ENCODE measurements at regions of chr7 and their contacts with region 1.

Region 1: DNA sequence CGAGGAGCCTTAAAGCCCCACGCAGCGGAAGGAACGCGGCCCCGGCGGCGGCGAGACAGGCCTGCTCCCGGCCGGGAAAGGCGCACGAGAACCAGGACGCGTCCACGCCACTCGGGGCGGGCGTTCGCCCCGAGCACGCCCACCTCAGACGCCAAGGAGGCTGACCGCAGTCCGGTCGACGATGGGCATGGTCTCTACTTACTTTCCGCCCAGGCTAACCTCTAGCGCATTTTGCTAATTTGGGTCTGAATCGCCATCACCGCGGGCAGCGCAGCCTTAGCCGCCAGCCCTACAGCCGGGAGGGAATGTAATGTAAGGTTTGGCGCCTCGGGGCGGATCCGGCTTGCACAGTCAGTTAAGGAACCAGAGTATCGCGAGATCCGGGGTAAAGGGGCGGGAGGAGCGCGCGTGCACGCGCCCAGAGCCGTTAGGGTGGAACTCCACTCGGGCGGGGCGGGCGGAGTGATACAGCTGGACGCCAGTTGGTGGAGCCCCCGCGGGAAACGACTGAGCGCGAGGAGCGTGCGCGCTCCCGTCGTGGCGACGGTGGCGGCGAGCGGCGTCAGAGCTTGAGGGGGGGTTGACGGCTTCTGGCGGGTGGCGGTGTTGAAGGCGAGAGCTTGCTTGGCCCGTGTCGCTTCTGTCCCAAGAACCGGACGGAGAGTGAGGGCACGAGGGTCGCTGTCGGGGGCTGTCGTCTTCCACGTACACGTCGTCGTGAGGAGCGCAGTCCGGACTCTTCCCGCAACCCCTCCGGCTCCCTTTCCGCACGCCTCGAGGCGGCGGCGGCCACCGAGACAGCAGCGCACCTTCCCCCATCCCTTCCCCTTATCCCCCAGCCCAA is at the start of gene LUC7L2:
- DNase-seq: peak; percentile 99 to 100
- ATAC-seq: peak; percentile 87 to 88
- H3K4me3 ChIP-seq: peak within 1 kb of the TSS; percentile 84 to 99 (median 95)
- H3K27ac ChIP-seq: peak within 1 kb of the TSS; percentile 99 to 100 (median 100)
- H3K4me1 ChIP-seq: peaks cover 33 to 34% of the 10 kb centered on the region in 2 donors
- H3K27me3 ChIP-seq: no peaks in the 10 kb centered on the region
- CTCF ChIP-seq: peak in 2 of 5 experiments; percentile 31
- POLR2A ChIP-seq: peak; percentile 90 to 95
- total RNA-seq, gene LUC7L2: 49.2 to 79.7 (median 54.0) TPM

Region 2: DNA sequence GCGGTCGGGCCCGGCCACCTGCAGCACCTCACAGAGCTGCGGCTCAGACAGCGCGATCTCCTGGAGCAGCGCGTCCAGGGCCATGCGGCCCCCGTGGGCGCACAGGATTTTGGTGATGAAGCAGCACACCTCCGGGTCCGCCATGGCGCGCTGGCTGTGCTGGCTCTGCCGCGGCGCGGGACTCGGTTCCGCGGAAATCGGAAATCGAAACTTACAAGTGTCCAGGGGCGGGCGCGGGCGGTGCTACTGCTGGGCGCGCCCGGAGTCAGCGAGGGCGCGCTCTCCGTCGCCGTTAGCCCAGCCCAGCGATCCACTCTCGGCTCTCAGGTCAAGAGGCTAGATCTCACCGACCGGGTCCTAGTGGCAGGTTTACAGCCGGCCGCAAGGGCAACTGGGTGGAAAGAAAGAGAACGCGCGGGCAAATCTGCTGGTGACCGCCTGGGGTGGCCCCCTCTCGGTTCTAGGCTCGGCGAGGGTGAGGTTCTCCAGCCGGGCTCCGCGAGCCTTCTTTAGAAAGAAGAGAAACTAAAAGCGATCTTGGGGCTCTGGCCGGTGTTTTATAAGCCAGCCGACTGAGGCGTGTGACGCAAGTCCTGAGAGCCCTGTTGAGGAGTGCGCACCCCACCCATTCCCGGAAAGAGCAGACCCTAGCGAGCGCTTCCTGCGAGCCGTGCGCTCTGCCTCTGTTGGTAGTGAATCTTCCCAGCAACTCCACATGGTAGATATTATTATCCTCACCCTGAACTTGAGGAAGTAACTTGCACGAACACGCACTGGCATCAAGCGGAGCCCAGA is 250.2 kb before region 1 on chr7 and contains the start of gene ZC3HAV1:
- in situ Hi-C with region 1: loop called in 1 of 4 experiments (anchors 25 kb)
- intact Hi-C with region 1: no loop called
- DNase-seq: peak; percentile 71 to 73
- ATAC-seq: peak; percentile 77 to 85
- H3K4me3 ChIP-seq: peak within 1 kb of the TSS; percentile 77 to 97 (median 90)
- H3K27ac ChIP-seq: peak within 1 kb of the TSS; percentile 84 to 92 (median 86)
- H3K4me1 ChIP-seq: peaks cover 5 to 6% of the 10 kb centered on the region in 2 donors
- H3K27me3 ChIP-seq: no peaks in the 10 kb centered on the region
- CTCF ChIP-seq: peak in 1 of 5 experiments; percentile 23
- POLR2A ChIP-seq: peak; percentile 45 to 67
- total RNA-seq, gene ZC3HAV1: 3.5 to 10.4 (median 4.5) TPM

Region 3: GRCh38 chr7:139230774-139231512 is 128.6 kb before region 1 on chr7 and contains the start of gene UBN2:
- in situ Hi-C with region 1: no loop called
- intact Hi-C with region 1: loop called (anchors 5 kb)
- DNase-seq: peak; percentile 91 to 93
- ATAC-seq: peak; percentile 98
- H3K4me3 ChIP-seq: peak within 1 kb of the TSS; percentile 83 to 99 (median 92)
- H3K27ac ChIP-seq: peak within 1 kb of the TSS; percentile 88 to 99 (median 96)
- H3K4me1 ChIP-seq: peaks cover 32 to 40% of the 10 kb centered on the region in 2 donors
- H3K27me3 ChIP-seq: no peaks in the 10 kb centered on the region
- CTCF ChIP-seq: no peak
- POLR2A ChIP-seq: peak; percentile 49 to 79
- total RNA-seq, gene UBN2: 12.0 to 24.8 (median 17.2) TPM

Region 4: GRCh38 chr7:139246905-139247304 is 112.7 kb before region 1 on chr7:
- in situ Hi-C with region 1: no loop called
- intact Hi-C with region 1: loop called (anchors 2 kb)
- DNase-seq: peak; percentile 60 to 72
- ATAC-seq: peak; percentile 69 to 80
- H3K4me3 ChIP-seq: no peak overlapping the region
- H3K27ac ChIP-seq: peak overlapping the region; percentile 80 to 89 (median 83)
- H3K4me1 ChIP-seq: peaks cover 35 to 41% of the 10 kb centered on the region in 2 donors
- H3K27me3 ChIP-seq: no peaks in the 10 kb centered on the region
- CTCF ChIP-seq: no peak
- POLR2A ChIP-seq: no peak

Region 5: GRCh38 chr7:139340037-139340807 is 19.4 kb before region 1 on chr7:
- in situ Hi-C with region 1: no loop called
- intact Hi-C with region 1: loop called (anchors 1 kb)
- DNase-seq: peak; percentile 98 to 100
- ATAC-seq: peak; percentile 86 to 89
- H3K4me3 ChIP-seq: peak overlapping the region; percentile 77 to 96 (median 86)
- H3K27ac ChIP-seq: peak overlapping the region; percentile 97 to 100 (median 100)
- H3K4me1 ChIP-seq: peaks cover 11 to 16% of the 10 kb centered on the region in 2 donors
- H3K27me3 ChIP-seq: no peaks in the 10 kb centered on the region
- CTCF ChIP-seq: peak; percentile 64 to 75 (median 72)
- POLR2A ChIP-seq: peak; percentile 56 to 66

Region 6: DNA sequence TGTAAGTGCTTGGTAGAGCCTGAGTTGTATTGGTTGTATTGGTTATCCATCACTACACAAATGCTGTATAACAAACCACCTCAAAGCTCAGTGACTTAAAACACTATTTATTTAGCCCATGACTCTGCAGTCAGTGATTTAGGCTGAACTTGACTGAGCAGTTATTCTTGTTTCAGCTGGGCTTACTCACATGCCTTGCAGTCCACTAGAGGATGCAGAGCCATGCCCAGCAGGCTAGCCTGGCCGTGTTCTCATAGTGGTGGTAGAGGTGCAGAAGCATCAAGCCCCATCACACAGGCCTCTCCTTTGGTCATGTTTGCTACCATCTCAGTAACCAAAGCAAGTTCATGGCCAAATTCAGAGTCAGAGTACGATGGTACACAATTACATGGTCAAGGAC is 44.0 kb after region 1 on chr7:
- in situ Hi-C with region 1: no loop called
- intact Hi-C with region 1: no loop called
- DNase-seq: no peak
- ATAC-seq: no peak
- H3K4me3 ChIP-seq: no peak overlapping the region
- H3K27ac ChIP-seq: no peak overlapping the region
- H3K4me1 ChIP-seq: no peaks in the 10 kb centered on the region
- H3K27me3 ChIP-seq: no peaks in the 10 kb centered on the region
- CTCF ChIP-seq: no peak
- POLR2A ChIP-seq: no peak

Region 7: GRCh38 chr7:139422126-139422525 is 62.5 kb after region 1 on chr7:
- in situ Hi-C with region 1: no loop called
- intact Hi-C with region 1: loop called (anchors 5 kb)
- DNase-seq: no peak
- ATAC-seq: no peak
- H3K4me3 ChIP-seq: no peak overlapping the region
- H3K27ac ChIP-seq: peak overlapping the region in 2 of 4 donors; percentile 44 to 54
- H3K4me1 ChIP-seq: peaks cover 12 to 18% of the 10 kb centered on the region in 2 donors
- H3K27me3 ChIP-seq: no peaks in the 10 kb centered on the region
- CTCF ChIP-seq: no peak
- POLR2A ChIP-seq: no peak

Region 8: DNA sequence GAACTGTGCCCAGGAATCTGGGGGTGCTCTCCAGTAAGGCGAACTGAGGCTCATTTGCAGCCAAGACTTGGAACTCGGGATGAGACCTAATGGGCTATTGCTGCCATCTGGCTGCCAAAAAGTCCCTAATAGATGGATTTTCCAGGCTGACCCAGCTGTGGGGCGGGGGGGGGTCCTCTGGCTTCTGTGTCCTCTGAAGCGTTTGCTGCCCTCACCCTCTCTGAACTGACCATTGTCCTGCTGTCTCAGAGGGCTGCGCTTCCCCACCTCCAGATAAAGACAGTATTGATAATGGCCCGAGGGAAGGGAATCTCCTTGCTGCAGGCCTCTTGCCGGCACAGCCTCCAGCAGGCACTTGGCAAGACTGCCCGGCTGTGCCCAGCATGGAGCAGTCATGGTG is 210.5 kb after region 1 on chr7:
- in situ Hi-C with region 1: no loop called
- intact Hi-C with region 1: loop called (anchors 5 kb)
- DNase-seq: no peak
- ATAC-seq: no peak
- H3K4me3 ChIP-seq: no peak overlapping the region
- H3K27ac ChIP-seq: peak overlapping the region in 3 of 4 donors; percentile 3 to 38 (median 7)
- H3K4me1 ChIP-seq: peaks cover 16 to 19% of the 10 kb centered on the region in 2 donors
- H3K27me3 ChIP-seq: no peaks in the 10 kb centered on the region
- CTCF ChIP-seq: peak in 2 of 5 experiments; percentile 11 to 30
- POLR2A ChIP-seq: no peak

Measured in gastrocnemius medialis (tissue), 4 donors.